PC-3 (cell line): ENCODE measurements at regions of chr7 and their contacts with region 1.

Region 1: DNA sequence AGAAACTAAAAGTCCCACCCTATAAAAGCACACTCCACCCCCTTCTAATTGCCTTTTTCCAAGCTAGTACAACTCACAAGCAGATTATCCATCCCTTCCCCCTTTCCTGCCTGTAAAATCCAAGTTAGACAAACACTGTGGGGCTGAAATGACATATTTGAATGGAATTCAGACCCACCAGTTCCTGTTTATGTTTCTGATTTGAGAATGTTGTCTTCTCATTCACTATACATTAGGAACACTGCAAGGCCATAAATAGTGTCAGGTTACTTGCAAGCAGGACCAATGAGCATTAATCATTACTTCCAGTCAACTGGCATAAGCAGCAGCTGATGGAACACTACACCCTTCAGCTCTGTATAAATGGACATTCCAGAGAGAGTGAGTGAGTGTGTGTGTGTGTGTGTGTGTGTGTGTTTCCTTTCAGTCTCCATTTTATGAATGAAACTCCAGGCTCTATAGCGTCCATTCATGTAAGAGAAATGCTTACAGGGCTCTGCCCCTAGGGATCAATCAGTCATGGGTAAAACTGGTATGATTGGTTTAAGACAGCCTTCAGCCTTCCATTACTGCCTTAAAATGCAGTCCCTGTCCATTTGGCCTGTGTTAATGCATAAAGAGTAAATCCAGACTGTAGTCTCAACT is 69.3 kb downstream of the ETV1 start:
- DNase-seq: peak; percentile 97
- ATAC-seq: peak; percentile 99
- H3K4me3 ChIP-seq: peak overlapping the region; percentile 57
- H3K27ac ChIP-seq: peak overlapping the region; percentile 93
- H3K4me1 ChIP-seq: peaks cover 21% of the 10 kb centered on the region
- H3K27me3 ChIP-seq: no peaks in the 10 kb centered on the region
- CTCF ChIP-seq: no peak

Region 2: DNA sequence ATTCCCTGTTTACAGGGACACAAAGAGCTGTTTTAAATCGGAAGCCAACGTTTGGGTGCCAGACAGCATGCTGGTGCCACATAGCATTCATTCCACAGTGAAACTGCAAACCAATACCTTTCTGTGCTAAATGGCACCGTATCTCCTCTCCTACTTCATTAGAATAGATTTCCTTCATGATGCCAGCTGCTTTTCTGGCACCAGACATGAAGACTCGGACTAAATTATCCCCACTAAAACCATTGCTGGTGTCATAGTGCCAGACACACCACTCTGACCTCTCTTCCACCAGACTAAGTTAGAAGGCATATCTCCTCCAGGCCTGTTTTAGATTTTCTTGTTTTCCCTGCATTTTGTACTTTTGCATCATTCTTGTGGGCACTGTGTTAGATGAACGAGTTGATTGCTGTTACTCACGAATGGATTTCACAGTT is 85.8 kb before region 1 on chr7:
- CTCF ChIA-PET with region 1: no interaction called
- POLR2A ChIA-PET with region 1: no interaction called
- intact Hi-C with region 1: no loop called
- DNase-seq: no peak
- ATAC-seq: no peak
- H3K4me3 ChIP-seq: no peak overlapping the region
- H3K27ac ChIP-seq: no peak overlapping the region
- H3K4me1 ChIP-seq: peaks cover 28% of the 10 kb centered on the region
- H3K27me3 ChIP-seq: no peaks in the 10 kb centered on the region
- CTCF ChIP-seq: no peak

Region 3: DNA sequence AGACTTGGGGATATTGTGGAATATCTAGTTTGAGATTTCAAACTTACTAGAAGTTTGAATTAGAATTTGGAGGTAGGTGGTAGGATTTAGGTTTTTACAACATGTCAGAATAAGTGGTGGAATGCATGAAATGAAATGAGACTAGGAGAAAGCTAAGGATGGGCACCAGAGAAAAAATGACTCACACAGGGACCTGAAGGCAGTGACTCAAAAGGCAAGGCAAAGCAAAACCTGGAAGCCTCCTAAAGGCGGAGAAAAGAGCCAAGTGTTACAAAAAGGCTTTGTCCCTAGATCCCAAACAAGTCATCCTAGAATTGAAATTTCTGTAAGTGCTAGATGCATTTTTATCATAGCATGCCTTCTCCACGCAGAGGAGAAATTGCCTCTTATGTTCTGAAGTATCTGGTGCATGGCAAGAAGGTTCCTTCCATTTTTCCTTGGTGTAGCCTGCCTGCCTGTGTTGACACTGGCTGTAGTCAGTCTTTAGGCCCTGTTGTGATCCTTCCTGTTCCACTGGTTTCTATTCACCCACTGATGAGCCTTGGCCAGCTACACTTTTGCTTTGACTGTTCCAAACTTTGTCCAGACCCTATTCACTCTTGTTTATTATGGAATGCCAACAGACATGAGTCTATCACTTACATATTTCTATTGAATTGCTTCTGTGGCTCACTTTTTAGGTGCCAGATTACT is 40.0 kb before region 1 on chr7:
- CTCF ChIA-PET with region 1: no interaction called
- POLR2A ChIA-PET with region 1: no interaction called
- intact Hi-C with region 1: loop called (anchors 1 kb)
- DNase-seq: peak; percentile 85
- ATAC-seq: peak; percentile 88
- H3K4me3 ChIP-seq: peak overlapping the region; percentile 16; the same call in 1 of the 2 replicates
- H3K27ac ChIP-seq: peak overlapping the region; percentile 90
- H3K4me1 ChIP-seq: peaks cover 42% of the 10 kb centered on the region
- H3K27me3 ChIP-seq: no peaks in the 10 kb centered on the region
- CTCF ChIP-seq: no peak